HCT116 (cell line): ENCODE measurements at regions of chr10 and their contacts with region 1.

Region 1: GRCh38 chr10:70381471-70382421 is 679 bp downstream of the LRRC20 start:
- DNase-seq: no peak
- ATAC-seq: peak; percentile 37
- H3K4me3 ChIP-seq: peak overlapping the region; percentile 70
- H3K27ac ChIP-seq: peak overlapping the region; percentile 60
- H3K4me1 ChIP-seq: peaks cover 32 to 48% of the 10 kb centered on the region in 2 experiments
- H3K27me3 ChIP-seq: no peaks in the 10 kb centered on the region
- CTCF ChIP-seq: no peak
- POLR2A ChIP-seq: no peak
- RAD21 ChIP-seq: no peak

Region 2: DNA sequence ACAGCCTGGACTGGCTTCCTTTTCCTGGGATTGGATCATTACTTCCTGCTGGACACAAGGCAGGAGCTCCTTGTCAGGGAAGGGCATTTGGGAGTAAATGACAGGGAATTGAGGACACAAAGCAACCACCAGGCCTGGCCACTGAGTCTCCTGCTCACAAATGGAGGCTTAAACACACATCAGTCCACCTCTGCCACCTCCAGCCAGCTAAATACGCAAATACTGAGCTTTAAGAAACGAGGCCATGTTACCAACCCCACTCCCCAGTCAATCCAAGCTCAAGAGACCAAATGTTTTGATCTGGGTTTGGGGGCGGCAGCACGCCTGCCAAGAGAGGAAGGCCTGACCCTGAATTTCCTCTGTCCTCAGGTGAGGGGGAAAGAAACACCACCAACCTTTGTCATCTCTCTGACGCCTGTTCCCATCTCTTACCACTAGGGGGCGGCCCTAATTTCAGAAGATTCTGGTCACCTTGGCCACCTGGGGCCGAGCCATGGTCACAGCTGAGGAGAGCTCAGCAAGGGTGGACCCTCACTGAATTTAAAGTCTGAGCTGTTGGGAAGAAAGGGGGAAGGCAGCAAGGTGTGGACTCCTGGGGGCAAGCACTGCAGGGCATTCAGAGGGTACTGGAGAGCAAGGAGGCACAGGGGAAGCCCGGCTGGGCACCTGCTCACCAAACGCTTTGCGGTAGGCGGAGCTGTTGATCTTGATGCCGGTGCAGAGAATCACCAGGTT is 265.6 kb before region 1 on chr10:
- CTCF ChIA-PET with region 1: interaction called, 10 read pairs
- POLR2A ChIA-PET with region 1: no interaction called
- RAD21 ChIA-PET with region 1: no interaction called
- intact Hi-C with region 1: no loop called
- DNase-seq: peak; percentile 21
- ATAC-seq: peak; percentile 86
- H3K4me3 ChIP-seq: no peak overlapping the region
- H3K27ac ChIP-seq: no peak overlapping the region
- H3K4me1 ChIP-seq: no peaks in the 10 kb centered on the region
- H3K27me3 ChIP-seq: no peaks in the 10 kb centered on the region
- CTCF ChIP-seq: peak; percentile 71 to 95 (median 89)
- POLR2A ChIP-seq: no peak
- RAD21 ChIP-seq: peak; percentile 65

Region 3: DNA sequence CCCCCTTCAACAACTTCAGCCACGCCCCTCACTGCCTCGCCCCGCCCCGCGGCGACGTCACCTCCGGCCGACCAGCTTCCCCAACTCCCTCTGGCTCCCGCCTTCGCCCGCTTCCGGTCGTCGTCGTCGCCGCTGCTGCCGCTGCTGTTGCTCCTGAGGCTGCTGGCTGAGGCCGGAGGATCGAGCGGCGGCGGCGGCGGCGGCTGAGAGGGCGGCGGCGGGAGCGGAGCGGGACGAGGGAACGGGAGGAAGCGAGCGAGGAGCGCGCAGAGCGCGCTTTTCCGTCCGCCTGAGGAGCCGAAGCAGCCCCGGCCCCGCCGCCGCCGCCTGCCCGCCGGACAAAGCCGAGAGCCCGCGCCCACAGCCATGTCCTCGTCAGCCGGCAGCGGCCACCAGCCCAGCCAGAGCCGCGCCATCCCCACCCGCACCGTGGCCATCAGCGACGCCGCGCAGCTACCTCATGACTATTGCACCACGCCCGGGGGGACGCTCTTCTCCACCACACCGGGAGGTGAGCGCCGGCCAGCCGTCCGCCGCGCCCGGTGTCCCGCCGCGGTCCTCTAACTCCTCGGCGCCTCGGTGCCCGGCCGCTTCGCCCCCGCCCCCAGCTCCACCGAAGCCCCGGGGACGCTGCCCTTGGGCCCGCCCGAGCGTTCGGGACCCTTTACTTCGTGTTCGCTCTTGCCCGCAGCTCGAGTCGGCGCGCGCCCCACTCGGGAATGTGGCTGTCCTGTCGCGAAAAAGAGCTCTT is 22.5 kb after region 1 on chr10 and contains the start of gene EIF4EBP2:
- CTCF ChIA-PET with region 1: interaction called, 10 read pairs
- POLR2A ChIA-PET with region 1: interaction called, 15 read pairs
- RAD21 ChIA-PET with region 1: no interaction called
- intact Hi-C with region 1: loop called (anchors 2 kb)
- DNase-seq: peak; percentile 87
- ATAC-seq: peak; percentile 90
- H3K4me3 ChIP-seq: peak within 1 kb of the TSS; percentile 80 to 86
- H3K27ac ChIP-seq: peak within 1 kb of the TSS; percentile 84
- H3K4me1 ChIP-seq: peaks cover 13 to 28% of the 10 kb centered on the region in 2 experiments
- H3K27me3 ChIP-seq: no peaks in the 10 kb centered on the region
- CTCF ChIP-seq: no peak
- POLR2A ChIP-seq: peak; percentile 65
- RAD21 ChIP-seq: no peak
- total RNA-seq, gene EIF4EBP2: 36.7 TPM